Activated CD4-positive, alpha-beta T cell treated with anti-CD3 and anti-CD28 coated beads for 36 hours (primary cell): ENCODE measurements at regions of chr1 and their contacts with region 1.

Region 1: GRCh38 chr1:203340112-203340804 is 10.7 kb downstream of the FMOD start:
- DNase-seq: peak; percentile 75
- ATAC-seq: peak; percentile 76
- H3K4me3 Mint-ChIP-seq: no peak overlapping the region
- H3K27ac Mint-ChIP-seq: no peak overlapping the region
- H3K4me1 Mint-ChIP-seq: peaks cover 27% of the 10 kb centered on the region
- H3K27me3 Mint-ChIP-seq: peaks cover 7% of the 10 kb centered on the region

Region 2: GRCh38 chr1:203038891-203039608 is 301.2 kb before region 1 on chr1:
- CTCF ChIA-PET with region 1: no interaction called
- POLR2A ChIA-PET with region 1: no interaction called
- intact Hi-C with region 1: loop called in 1 of 2 experiments (anchors 5 kb)
- DNase-seq: peak; percentile 77
- ATAC-seq: peak; percentile 85
- H3K4me3 Mint-ChIP-seq: no peak overlapping the region
- H3K27ac Mint-ChIP-seq: no peak overlapping the region
- H3K4me1 Mint-ChIP-seq: peaks cover 4% of the 10 kb centered on the region
- H3K27me3 Mint-ChIP-seq: peaks cover 4% of the 10 kb centered on the region

Region 3: GRCh38 chr1:203290261-203291089 is 49.8 kb before region 1 on chr1:
- CTCF ChIA-PET with region 1: interaction called, 125 read pairs
- POLR2A ChIA-PET with region 1: no interaction called
- intact Hi-C with region 1: no loop called
- DNase-seq: peak; percentile 99
- ATAC-seq: peak; percentile 50
- H3K4me3 Mint-ChIP-seq: peak overlapping the region; percentile 78
- H3K27ac Mint-ChIP-seq: peak overlapping the region; percentile 98
- H3K4me1 Mint-ChIP-seq: peaks cover 83% of the 10 kb centered on the region
- H3K27me3 Mint-ChIP-seq: no peaks in the 10 kb centered on the region

Region 4: GRCh38 chr1:203320591-203321272 is 19.5 kb before region 1 on chr1:
- CTCF ChIA-PET with region 1: interaction called, 154 read pairs
- POLR2A ChIA-PET with region 1: no interaction called
- intact Hi-C with region 1: no loop called
- DNase-seq: peak; percentile 71
- ATAC-seq: peak; percentile 65
- H3K4me3 Mint-ChIP-seq: peak overlapping the region; percentile 29
- H3K27ac Mint-ChIP-seq: peak overlapping the region; percentile 80
- H3K4me1 Mint-ChIP-seq: peaks cover 77% of the 10 kb centered on the region
- H3K27me3 Mint-ChIP-seq: no peaks in the 10 kb centered on the region

Region 5: DNA sequence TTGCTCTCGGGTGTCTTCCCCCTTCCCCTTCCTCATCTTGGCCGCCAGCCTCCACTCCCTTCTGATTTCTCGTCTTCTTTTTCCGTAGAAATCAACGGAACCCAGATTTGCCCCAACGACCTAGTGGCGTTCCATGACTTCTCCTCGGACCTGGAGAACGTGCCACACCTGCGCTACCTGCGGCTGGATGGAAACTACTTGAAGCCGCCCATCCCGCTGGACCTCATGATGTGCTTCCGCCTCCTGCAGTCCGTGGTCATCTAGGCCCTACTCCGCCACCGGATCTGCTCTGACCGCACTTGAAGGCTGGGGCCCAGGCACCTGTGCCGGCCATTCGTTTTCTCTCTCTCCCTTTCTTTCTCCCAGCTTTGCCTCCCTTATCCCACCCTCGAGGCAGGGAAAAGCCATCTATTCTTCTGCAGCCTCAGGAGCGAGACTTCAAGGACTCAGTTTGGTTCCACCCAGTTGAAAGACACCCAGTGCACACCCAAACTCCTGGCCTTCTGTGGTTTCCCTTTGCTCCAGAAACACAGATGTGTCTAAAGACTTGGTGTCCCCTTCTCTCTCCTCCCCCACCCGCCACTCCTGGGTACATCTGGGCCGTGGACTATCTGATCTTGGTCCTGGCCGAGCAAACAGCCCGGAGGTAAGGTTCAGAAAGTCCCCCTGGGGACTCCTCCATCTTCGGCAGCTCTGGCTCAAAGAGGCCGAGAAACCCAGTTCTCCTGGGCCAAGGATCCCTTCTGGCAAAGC is 146.5 kb after region 1 on chr1:
- CTCF ChIA-PET with region 1: interaction called, 76 read pairs
- POLR2A ChIA-PET with region 1: no interaction called
- intact Hi-C with region 1: loop called (anchors 1 kb)
- DNase-seq: no peak
- ATAC-seq: no peak
- H3K4me3 Mint-ChIP-seq: peak overlapping the region; percentile 56
- H3K27ac Mint-ChIP-seq: no peak overlapping the region
- H3K4me1 Mint-ChIP-seq: peaks cover 7% of the 10 kb centered on the region
- H3K27me3 Mint-ChIP-seq: no peaks in the 10 kb centered on the region